Activated B cell treated with CpG ODN at 0.5 μM for 24 hours (primary cell): ENCODE measurements at regions of chr1 and their contacts with region 1.

Region 1: GRCh38 chr1:205775015-205775716 is at the start of gene RAB29:
- DNase-seq: peak; percentile 79
- ATAC-seq: peak; percentile 76
- H3K4me3 Mint-ChIP-seq: peak within 1 kb of the TSS; percentile 93
- H3K27ac Mint-ChIP-seq: peak within 1 kb of the TSS; percentile 98
- H3K4me1 Mint-ChIP-seq: peaks cover 66% of the 10 kb centered on the region
- H3K27me3 Mint-ChIP-seq: no peaks in the 10 kb centered on the region
- CTCF ChIP-seq: no peak
- total RNA-seq, gene RAB29: 149 and 156 TPM in 2 replicates

Region 2: DNA sequence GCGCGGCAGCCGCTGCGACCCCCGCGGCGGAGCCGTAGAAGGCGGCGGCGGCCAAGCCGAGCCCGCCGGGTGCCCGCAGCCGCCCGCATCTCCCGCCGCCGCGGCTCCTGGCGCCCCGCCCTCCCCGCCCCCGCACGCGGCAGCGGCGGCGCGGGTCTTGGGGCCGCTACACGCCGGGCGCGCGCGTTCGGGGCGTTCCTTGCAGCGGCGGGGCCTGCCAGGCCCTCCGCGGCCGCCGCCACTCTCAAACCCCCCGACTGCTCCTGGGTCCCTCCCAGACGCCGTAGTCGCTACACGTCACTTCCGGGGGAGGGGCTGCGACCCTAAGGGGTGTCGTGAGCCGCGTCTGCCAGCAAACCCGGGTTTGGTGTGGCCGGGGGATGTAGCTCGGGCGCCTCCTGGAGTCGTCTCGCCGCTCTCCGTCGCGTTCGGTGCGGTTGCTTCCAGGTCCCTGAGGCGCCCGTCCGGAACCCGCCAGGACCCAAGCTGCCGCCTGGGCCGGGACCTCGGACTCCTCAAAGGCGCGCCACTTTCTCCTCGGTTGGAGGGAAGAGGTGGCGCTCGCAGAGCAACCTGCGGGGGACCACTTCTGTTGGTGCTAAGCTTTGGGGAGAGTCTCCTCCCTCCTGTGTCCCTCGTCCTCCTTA is 143.3 kb before region 1 on chr1 and contains the start of gene ELK4:
- CTCF ChIA-PET with region 1: no interaction called
- POLR2A ChIA-PET with region 1: interaction called, 9 read pairs
- intact Hi-C with region 1: loop called (anchors 1 kb)
- DNase-seq: peak; percentile 99
- ATAC-seq: peak; percentile 83
- H3K4me3 Mint-ChIP-seq: peak within 1 kb of the TSS; percentile 96
- H3K27ac Mint-ChIP-seq: peak within 1 kb of the TSS; percentile 96
- H3K4me1 Mint-ChIP-seq: peaks cover 46% of the 10 kb centered on the region
- H3K27me3 Mint-ChIP-seq: no peaks in the 10 kb centered on the region
- CTCF ChIP-seq: no peak
- total RNA-seq, gene ELK4: 130 and 141 TPM in 2 replicates

Region 3: DNA sequence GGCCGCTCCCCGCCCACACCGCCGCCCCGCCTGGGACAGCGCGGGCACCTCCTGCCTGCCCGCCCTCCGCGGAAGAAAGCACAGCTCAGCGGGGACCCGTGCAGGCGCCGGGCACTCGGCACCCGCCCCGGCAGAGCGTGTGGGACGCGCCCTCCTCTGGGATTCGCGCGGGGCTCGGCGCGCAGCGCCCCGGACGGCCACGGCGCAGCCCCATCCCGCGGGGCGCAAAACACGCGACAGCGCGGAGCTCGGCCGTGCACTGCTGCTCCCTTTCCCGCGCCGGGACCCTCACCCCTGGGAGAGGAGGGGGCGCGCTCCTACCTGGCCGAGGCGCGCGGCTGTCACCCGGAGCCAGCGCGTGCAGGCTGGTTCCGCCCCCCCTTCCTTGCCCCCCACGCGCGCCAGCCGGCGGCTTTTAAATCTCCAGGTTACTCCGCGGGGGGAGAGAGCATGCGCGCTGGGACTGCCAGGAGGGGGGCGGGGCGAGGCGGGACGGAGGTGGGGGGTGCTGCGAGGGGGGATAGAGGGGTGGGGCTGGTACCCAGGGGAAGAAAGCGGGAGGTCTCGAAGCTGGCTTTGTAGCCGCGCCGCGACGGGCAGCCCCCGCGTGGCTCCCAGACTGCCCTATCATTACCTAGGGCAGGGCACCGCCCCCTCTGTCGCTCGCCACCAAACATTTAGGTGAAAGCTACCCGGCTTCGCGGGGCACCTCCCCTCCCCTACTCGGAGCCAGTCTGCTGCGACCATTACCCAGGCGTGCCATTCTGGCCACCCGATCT is 94.9 kb before region 1 on chr1 and contains the start of gene SLC45A3:
- CTCF ChIA-PET with region 1: no interaction called
- POLR2A ChIA-PET with region 1: interaction called, 10 read pairs
- intact Hi-C with region 1: no loop called
- DNase-seq: no peak
- ATAC-seq: peak; percentile 75
- H3K4me3 Mint-ChIP-seq: peak within 1 kb of the TSS; percentile 85
- H3K27ac Mint-ChIP-seq: peak within 1 kb of the TSS; percentile 46
- H3K4me1 Mint-ChIP-seq: peaks cover 26% of the 10 kb centered on the region
- H3K27me3 Mint-ChIP-seq: peaks cover 2% of the 10 kb centered on the region
- CTCF ChIP-seq: no peak
- total RNA-seq, gene SLC45A3: 6.9 and 7.4 TPM in 2 replicates

Region 4: DNA sequence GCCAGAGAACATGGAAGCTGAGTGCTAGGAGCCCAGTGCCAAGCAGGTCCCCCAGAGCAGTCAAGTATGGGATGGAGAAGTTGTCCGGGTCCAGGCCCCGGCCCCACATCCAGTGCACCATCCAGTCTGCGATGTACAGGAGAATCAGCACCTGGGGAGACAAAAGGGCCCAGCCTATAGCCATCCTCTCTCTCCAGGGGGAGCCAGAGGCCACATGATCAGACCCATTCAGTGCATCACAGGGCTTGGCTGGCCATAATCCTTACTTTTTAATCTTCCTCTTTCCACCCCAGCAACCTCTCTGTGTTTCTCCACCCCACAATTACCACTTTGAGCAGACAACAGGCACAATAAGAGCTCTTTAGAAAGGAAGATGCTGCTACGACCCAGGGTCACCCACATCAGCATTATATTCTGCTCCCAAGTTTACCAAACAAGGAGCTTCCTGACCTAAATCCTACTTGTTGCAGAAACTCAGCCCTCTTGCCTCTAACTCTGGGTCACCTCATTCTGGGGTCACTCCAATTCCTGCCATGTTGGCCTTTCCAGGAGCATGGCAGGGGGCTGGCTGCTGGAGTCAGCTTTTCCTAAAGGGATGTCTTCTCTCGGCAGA is 16.5 kb after region 1 on chr1:
- CTCF ChIA-PET with region 1: interaction called, 7 read pairs
- POLR2A ChIA-PET with region 1: interaction called, 104 read pairs
- intact Hi-C with region 1: loop called (anchors 1 kb)
- DNase-seq: peak; percentile 46
- ATAC-seq: peak; percentile 65
- H3K4me3 Mint-ChIP-seq: no peak overlapping the region
- H3K27ac Mint-ChIP-seq: peak overlapping the region; percentile 63
- H3K4me1 Mint-ChIP-seq: peaks cover 37% of the 10 kb centered on the region
- H3K27me3 Mint-ChIP-seq: no peaks in the 10 kb centered on the region
- CTCF ChIP-seq: no peak

Region 5: GRCh38 chr1:205849619-205850355 is 74.6 kb after region 1 on chr1 and contains the start of gene PM20D1:
- CTCF ChIA-PET with region 1: no interaction called
- POLR2A ChIA-PET with region 1: interaction called, 12 read pairs
- intact Hi-C with region 1: no loop called
- DNase-seq: peak; percentile 69
- ATAC-seq: peak; percentile 99
- H3K4me3 Mint-ChIP-seq: peak within 1 kb of the TSS; percentile 93
- H3K27ac Mint-ChIP-seq: peak within 1 kb of the TSS; percentile 91
- H3K4me1 Mint-ChIP-seq: peaks cover 14% of the 10 kb centered on the region
- H3K27me3 Mint-ChIP-seq: no peaks in the 10 kb centered on the region
- CTCF ChIP-seq: no peak
- total RNA-seq, gene PM20D1: 1.2 and 2.1 TPM in 2 replicates

Region 6: DNA sequence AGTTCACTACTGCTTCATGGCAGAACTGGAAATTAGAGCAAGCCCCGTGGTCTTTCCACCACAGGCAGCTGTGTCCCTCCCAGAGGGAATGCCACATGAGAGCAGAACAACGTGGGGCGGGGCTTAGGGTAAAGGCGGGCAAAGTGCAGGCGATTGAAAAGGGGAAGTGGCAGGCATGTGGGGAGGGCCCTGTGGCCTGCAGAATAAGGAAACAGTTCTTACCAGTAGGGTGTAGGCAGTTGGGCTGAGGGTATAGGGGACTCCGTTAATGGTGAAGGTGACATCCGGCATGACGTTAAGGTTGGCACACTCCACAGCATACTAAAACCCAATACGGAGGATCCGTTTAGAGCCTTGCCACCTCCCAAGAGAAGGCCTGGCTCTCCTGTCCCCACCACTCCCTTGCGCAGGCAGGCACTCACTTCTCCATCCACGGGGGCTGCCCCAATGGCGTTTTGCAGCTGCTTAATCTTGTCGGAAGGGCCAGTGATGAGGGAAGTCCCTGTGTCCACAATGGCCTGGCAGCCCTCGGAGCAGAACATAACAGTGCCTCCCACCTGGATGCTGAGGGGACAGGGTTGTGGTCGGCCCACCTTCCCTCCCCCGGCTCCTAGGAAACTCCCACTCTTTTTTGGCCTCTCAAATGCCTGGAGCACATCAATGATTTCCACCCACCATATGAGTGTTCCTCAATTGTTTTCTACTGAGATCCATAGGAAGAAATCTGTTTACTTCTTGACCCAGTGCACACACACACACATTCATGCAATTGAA is 237.1 kb after region 1 on chr1:
- CTCF ChIA-PET with region 1: no interaction called
- POLR2A ChIA-PET with region 1: interaction called, 5 read pairs
- intact Hi-C with region 1: loop called (anchors 1 kb)
- DNase-seq: peak; percentile 79
- ATAC-seq: peak; percentile 99
- H3K4me3 Mint-ChIP-seq: peak overlapping the region; percentile 70
- H3K27ac Mint-ChIP-seq: peak overlapping the region; percentile 91
- H3K4me1 Mint-ChIP-seq: peaks cover 27% of the 10 kb centered on the region
- H3K27me3 Mint-ChIP-seq: no peaks in the 10 kb centered on the region
- CTCF ChIP-seq: no peak

Region 7: DNA sequence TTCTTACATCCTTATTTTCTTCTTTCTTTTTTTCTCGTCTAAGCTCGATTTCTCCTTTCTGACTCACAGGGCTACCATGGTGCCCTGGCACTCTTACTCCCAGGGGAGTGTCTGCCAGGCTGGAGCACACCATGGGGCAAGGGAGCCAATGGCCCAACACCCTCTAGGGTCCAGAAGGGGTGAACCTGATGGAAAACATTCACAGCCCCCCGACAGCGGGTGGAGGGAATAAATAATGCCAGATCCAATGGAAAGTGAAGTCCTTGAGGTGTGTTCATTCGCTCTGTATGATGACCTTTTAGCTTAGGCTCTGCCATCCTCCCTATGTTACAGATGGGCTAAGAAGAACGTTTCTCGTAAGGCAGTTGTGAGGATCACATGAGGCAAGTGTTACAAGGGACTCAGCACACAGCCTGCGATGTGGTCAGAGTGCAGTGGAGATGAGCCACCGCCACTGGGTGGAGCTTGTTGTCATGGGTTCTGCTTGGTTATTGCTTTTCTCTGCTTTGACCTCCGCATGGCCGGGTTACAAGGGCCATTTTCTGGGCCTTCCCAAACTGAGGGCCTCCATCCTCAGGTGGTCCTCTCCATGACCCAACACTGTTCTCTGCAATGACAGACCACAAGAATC is 1150.1 kb after region 1 on chr1:
- CTCF ChIA-PET with region 1: no interaction called
- POLR2A ChIA-PET with region 1: no interaction called
- intact Hi-C with region 1: loop called (anchors 10 kb)
- DNase-seq: peak; percentile 63
- ATAC-seq: peak; percentile 55
- H3K4me3 Mint-ChIP-seq: no peak overlapping the region
- H3K27ac Mint-ChIP-seq: no peak overlapping the region
- H3K4me1 Mint-ChIP-seq: peaks cover 33% of the 10 kb centered on the region
- H3K27me3 Mint-ChIP-seq: no peaks in the 10 kb centered on the region
- CTCF ChIP-seq: no peak